Right cardiac atrium (tissue), 5 donors: ENCODE measurements at regions of chr15 and their contacts with region 1.

Region 1: GRCh38 chr15:91291673-91292072 is 191.6 kb downstream of the SV2B start:
- DNase-seq: no peak
- ATAC-seq: peak in 1 of 2 donors; percentile 43
- H3K4me3 ChIP-seq: peak overlapping the region; percentile 8
- H3K27ac ChIP-seq: no peak overlapping the region
- H3K4me1 ChIP-seq: no peaks in the 10 kb centered on the region
- H3K27me3 ChIP-seq: no peaks in the 10 kb centered on the region

Region 2: GRCh38 chr15:91369823-91370222 is 78.2 kb after region 1 on chr15:
- intact Hi-C with region 1: no loop called
- DNase-seq: no peak
- ATAC-seq: no peak
- H3K4me3 ChIP-seq: no peak overlapping the region
- H3K27ac ChIP-seq: no peak overlapping the region
- H3K4me1 ChIP-seq: no peaks in the 10 kb centered on the region
- H3K27me3 ChIP-seq: no peaks in the 10 kb centered on the region

Region 3: GRCh38 chr15:91874992-91875660 is 583.5 kb after region 1 on chr15:
- intact Hi-C with region 1: loop called in 1 of 4 experiments (anchors 5 kb)
- DNase-seq: no peak
- ATAC-seq: no peak
- H3K4me3 ChIP-seq: no peak overlapping the region
- H3K27ac ChIP-seq: no peak overlapping the region
- H3K4me1 ChIP-seq: peaks cover 14% of the 10 kb centered on the region
- H3K27me3 ChIP-seq: no peaks in the 10 kb centered on the region